ENCODE measurements at regions of chrX and their contacts with region 1.

Region 1: GRCh38 chrX:57156397-57157049 is 19.3 kb upstream of the SPIN2A start:
- DNase-seq: no peak
- ATAC-seq: no peak
- H3K4me3 ChIP-seq: no peak overlapping the region
- H3K4me3 Mint-ChIP-seq: no peak overlapping the region
- H3K27ac ChIP-seq: no peak overlapping the region
- H3K27ac Mint-ChIP-seq: no peak overlapping the region
- H3K4me1 ChIP-seq: no peaks in the 10 kb centered on the region
- H3K4me1 Mint-ChIP-seq: peaks cover 0 to 4% (median 0%) of the 10 kb centered on the region in 7 donors
- H3K27me3 ChIP-seq: no peaks in the 10 kb centered on the region
- H3K27me3 Mint-ChIP-seq: no peaks in the 10 kb centered on the region

Region 2: DNA sequence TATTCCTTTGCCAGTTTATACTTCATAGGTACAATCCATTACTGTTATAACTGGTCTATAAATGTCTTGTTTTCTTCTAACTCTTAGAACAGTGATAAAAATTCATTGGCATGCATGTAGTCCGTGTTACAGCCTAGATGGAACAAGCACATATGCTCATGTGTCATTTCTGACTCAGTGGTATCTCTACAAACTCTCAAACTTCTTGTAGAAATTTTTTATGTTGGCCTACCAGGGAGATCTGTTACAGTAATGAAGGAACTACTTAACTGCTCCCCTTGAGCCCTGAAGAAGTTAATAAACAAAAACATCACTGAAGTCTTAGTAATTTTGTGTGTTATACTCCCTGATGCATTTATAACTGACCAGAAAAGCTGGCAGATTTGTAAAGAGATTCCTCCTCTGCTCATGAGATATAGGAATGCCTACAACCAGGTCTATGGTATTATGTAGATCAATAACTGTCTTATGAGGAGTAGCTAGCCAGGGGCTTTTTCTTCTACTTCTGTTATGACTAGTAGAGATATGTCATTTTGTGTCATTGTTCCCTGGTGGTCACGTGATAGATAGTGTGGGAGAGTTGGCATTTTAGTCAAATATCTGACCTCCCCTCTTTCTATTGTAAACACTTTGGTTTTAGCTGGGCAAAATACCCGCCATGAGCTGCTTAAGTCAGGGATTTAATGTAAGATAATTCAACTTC is 76.3 kb after region 1 on chrX:
- CTCF ChIA-PET with region 1: no interaction called
- POLR2A ChIA-PET with region 1: no interaction called
- intact Hi-C with region 1: no loop called
- DNase-seq: no peak
- ATAC-seq: no peak
- H3K4me3 ChIP-seq: no peak overlapping the region
- H3K4me3 Mint-ChIP-seq: no peak overlapping the region
- H3K27ac ChIP-seq: no peak overlapping the region
- H3K27ac Mint-ChIP-seq: no peak overlapping the region
- H3K4me1 ChIP-seq: no peaks in the 10 kb centered on the region
- H3K4me1 Mint-ChIP-seq: no peaks in the 10 kb centered on the region
- H3K27me3 ChIP-seq: no peaks in the 10 kb centered on the region
- H3K27me3 Mint-ChIP-seq: no peaks in the 10 kb centered on the region

Region 3: DNA sequence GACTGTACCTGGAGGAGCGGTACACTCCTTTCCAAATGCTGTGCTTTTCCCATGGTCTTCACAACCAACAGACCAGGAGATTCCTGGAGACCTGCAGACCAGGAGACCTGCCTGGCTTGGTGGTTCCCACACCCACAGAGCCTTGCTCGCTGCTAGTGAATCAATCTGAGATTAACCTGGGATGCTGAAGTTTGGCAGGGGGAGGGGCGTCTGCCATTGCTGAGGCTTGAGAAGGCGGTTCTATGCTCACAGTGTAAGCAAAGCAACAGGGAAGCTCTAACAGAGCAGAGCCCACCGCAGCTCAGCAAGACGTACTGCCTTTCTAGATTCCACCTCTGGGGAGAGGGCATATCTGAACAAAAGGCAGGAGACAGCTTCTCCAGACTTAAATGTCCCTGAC is 95.4 kb after region 1 on chrX:
- CTCF ChIA-PET with region 1: no interaction called
- POLR2A ChIA-PET with region 1: no interaction called
- intact Hi-C with region 1: no loop called
- DNase-seq: no peak
- ATAC-seq: no peak
- H3K4me3 ChIP-seq: no peak overlapping the region
- H3K4me3 Mint-ChIP-seq: no peak overlapping the region
- H3K27ac ChIP-seq: no peak overlapping the region
- H3K27ac Mint-ChIP-seq: no peak overlapping the region
- H3K4me1 ChIP-seq: no peaks in the 10 kb centered on the region
- H3K4me1 Mint-ChIP-seq: no peaks in the 10 kb centered on the region
- H3K27me3 ChIP-seq: no peaks in the 10 kb centered on the region
- H3K27me3 Mint-ChIP-seq: no peaks in the 10 kb centered on the region

Region 4: GRCh38 chrX:57453901-57454300 is 297.4 kb after region 1 on chrX:
- CTCF ChIA-PET with region 1: no interaction called
- POLR2A ChIA-PET with region 1: no interaction called
- intact Hi-C with region 1: loop called in 1 of 2 experiments (anchors 2 kb)
- DNase-seq: peak in 7 of 9 donors; percentile 0 to 35 (median 14)
- ATAC-seq: no peak
- H3K4me3 ChIP-seq: no peak overlapping the region
- H3K4me3 Mint-ChIP-seq: no peak overlapping the region
- H3K27ac ChIP-seq: no peak overlapping the region
- H3K27ac Mint-ChIP-seq: peak overlapping the region in 1 of 9 donors; percentile 62
- H3K4me1 ChIP-seq: no peaks in the 10 kb centered on the region
- H3K4me1 Mint-ChIP-seq: peaks cover 0 to 3% (median 0%) of the 10 kb centered on the region in 7 donors
- H3K27me3 ChIP-seq: no peaks in the 10 kb centered on the region
- H3K27me3 Mint-ChIP-seq: no peaks in the 10 kb centered on the region